ENCODE measurements at regions of chr6 and their contacts with region 1.

Region 1: DNA sequence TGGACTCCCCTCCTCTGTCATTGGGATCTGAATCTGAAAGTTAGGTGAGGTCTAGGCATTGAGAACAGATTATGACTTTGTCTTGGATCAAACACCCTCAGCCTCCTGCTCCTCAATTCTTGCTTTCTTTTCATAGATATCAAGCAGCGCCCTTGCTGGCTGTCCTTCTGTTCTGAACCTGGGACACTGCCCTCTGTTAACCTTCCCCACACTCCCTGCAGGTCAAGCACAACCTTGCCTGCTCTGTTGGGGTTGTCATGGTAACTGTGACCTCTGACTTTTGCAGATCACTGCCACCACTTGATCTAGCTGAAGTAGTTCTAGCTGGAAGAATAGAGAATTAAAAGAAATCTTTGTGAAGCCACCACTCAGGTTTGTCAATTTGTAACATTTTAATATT is 16.4 kb upstream of the MICA start:
- DNase-seq: no peak
- ATAC-seq: no peak
- H3K4me3 ChIP-seq: no peak overlapping the region
- H3K27ac ChIP-seq: no peak overlapping the region
- H3K4me1 ChIP-seq: no peaks in the 10 kb centered on the region
- H3K27me3 ChIP-seq: no peaks in the 10 kb centered on the region
- CTCF ChIP-seq: no peak
- POLR2A ChIP-seq: no peak

Region 2: DNA sequence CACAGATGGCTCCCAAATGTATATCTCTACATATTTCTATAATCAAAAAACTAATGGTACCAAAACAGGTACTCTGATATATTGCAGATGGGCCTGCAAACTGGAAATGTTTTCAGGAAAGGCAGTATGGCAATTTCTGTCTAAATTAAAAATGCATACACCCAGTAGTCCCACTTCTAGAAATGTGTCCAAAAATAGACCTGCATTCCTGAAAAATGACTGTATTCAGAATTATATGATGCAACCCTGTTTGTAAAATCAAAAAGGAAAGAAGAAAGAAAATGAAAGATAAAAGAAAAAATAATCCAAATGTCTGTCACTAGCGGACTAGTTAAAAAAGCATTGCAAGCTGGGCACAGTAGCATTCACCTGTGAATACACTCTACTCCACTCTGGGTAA is 98.1 kb after region 1 on chr6:
- in situ Hi-C with region 1: no loop called
- intact Hi-C with region 1: loop called (anchors 2 kb)
- DNase-seq: no peak
- ATAC-seq: no peak
- H3K4me3 ChIP-seq: no peak overlapping the region
- H3K27ac ChIP-seq: no peak overlapping the region
- H3K4me1 ChIP-seq: no peaks in the 10 kb centered on the region
- H3K27me3 ChIP-seq: no peaks in the 10 kb centered on the region
- CTCF ChIP-seq: no peak
- POLR2A ChIP-seq: no peak

Measured in gastrocnemius medialis (tissue), 4 donors.